ENCODE measurements at regions of chr16 and their contacts with region 1.

Region 1: GRCh38 chr16:88442727-88443576 is 10.1 kb upstream of the ZFPM1 start:
- DNase-seq: peak; percentile 53 to 96 (median 74)

Region 2: DNA sequence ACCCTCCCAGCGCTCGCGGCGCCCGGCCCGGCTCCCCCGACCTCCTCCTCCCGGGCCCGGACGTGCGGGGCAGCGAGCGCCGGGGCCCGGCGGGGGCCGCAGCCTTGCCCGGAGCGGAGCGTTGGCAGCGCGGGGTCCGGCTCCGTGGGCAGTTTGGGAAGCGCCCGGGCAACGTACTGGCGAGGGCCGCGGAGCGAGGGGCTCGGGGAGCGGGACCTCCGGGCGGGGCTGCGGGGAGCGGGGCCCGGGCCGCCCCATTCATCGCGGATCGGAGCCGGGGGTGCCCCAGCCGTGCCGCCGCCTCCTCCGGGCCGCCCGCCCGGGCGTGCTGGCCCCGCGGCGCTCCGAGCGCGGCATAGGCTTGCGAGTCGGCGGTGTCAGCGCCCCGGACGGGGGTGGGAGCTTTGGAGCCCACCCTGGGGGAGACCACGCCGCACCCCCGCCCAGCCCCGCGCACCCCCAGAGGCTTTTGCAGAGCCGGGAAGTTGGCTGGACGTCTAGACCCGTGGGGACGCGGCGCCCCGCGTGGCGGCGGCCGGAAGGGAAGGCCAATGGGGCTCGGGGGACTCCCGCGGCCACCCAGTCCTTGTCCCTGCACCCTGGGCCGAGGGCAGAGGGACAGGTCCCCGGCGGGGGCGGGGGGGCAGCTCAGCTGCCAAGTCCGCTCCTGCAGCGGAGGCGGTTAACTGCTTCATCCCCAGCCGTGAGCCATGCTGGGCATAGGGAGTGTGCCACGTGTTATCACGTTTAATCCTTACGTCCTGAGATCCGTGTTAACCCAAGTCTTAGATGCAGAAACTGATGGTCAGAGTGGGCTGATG is 59.3 kb before region 1 on chr16:
- intact Hi-C with region 1: no loop called
- DNase-seq: peak in 6 of 10 donors; percentile 37 to 93 (median 66)

Region 3: DNA sequence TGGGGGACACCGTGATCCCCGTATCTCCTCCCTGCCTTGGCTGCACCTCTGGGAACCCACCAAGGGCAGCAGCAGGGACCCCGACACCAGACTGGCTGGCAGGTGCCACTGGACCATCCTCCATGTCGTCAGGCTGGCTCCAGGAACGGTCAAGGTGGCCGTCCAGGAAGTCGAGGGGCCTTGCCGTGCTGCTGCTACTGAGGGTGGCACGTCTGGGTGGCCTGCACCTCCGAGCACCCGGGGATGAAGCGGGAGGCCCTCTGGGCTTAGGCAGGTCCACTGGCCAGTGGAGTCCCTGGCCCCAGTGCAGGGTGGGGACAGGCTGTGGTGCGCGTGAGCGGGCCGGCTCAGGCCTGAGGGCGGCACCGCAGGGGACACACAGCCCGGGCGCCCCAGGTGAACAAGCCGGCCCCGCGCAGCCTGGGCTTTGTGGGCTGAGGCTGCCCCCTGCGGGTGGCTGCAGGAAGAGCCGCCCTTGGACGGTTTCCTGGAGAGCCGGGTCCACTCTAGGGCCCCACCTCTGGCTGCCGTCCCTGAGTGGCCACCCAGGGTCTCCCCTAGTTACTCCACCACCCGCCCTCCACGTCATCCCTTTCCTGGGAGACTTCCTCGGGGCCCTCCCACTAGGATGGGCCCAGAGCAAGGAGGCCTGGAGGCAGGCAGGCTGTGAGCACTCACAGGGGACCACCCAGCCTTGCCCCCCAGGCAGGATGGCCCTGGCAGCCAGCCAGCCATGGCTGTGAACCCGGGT is 84.4 kb after region 1 on chr16:
- intact Hi-C with region 1: loop called (anchors 2 kb)
- DNase-seq: peak in 8 of 10 donors; percentile 56 to 94 (median 66)

Region 4: GRCh38 chr16:88561485-88562369 is 118.8 kb after region 1 on chr16:
- intact Hi-C with region 1: loop called (anchors 2 kb)
- DNase-seq: peak in 9 of 10 donors; percentile 40 to 93 (median 56)

Measured in posterior cingulate gyrus (tissue), 11 donors.